Heart left ventricle (tissue), 16 donors: ENCODE measurements at regions of chr11 and their contacts with region 1.

Region 1: DNA sequence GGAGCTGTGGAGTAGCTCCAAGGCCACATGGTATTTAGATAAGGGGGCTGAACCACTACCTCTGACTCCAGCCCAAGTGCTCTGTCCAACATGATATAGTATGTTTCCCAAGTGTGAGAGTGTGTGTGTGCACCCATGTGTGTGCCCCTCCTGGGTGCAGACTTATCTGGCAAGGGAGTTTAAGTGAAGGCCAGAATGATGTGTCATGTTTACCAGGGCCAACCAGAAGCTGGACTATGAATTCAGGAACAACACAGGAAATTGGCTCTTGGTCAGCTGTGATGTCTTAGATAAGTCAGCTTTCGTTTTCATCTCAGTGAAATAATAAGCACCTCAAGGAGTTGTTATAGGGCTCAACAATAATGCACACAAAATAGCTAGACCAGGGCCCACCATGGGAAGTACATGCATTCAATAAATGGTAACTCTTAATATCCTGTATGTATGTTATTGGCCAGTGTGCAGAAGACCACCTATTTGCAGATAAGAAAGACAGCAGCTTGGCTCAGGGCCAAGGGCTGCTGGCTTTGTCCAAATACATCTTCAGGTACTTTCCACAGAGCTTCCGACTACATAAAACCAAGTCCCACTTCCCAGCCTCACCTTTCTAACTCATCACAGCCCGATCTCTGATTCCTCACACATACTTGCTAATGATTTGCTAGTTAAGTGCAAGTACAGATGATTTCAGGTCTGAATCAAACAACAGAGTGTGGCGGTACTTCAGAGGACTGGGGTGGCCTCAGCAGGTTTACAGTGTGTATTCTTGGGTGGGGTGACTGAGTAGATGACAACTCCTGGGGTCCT is 120.9 kb downstream of the ME3 start:
- DNase-seq: peak in 1 of 5 donors; percentile 33
- ATAC-seq: peak; percentile 24 to 68 (median 59)
- H3K4me3 ChIP-seq: no peak overlapping the region
- H3K27ac ChIP-seq: peak overlapping the region; percentile 51 to 89 (median 66)
- H3K4me1 ChIP-seq: peaks cover 5 to 58% (median 33%) of the 10 kb centered on the region in 12 donors
- H3K27me3 ChIP-seq: no peaks in the 10 kb centered on the region
- CTCF ChIP-seq: no peak
- POLR2A ChIP-seq: peak in 1 of 2 donors; percentile 24

Region 2: DNA sequence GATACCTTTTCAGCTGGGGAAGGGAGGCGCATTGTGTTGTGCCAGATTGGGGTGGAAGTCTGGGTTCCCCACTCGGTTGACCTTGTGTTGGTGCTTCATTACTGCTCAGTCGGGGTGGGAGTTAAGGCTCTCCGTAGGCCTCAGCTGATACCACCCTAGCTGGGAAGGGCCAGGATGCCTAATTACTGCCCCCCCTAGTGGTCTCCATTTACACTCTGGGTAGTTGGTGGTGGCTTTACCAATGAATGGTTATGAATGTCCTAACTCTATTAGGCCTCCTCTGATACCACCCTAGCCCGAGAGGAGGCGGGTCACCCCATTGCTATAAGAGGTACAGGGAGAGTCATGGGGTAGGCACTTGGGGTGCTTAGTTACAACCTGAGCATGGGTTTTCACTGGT is 277.0 kb before region 1 on chr11:
- intact Hi-C with region 1: no loop called
- DNase-seq: no peak
- ATAC-seq: no peak
- H3K4me3 ChIP-seq: no peak overlapping the region
- H3K27ac ChIP-seq: no peak overlapping the region
- H3K4me1 ChIP-seq: no peaks in the 10 kb centered on the region
- H3K27me3 ChIP-seq: no peaks in the 10 kb centered on the region
- CTCF ChIP-seq: peak in 2 of 12 donors; percentile 18 to 19
- POLR2A ChIP-seq: no peak

Region 3: DNA sequence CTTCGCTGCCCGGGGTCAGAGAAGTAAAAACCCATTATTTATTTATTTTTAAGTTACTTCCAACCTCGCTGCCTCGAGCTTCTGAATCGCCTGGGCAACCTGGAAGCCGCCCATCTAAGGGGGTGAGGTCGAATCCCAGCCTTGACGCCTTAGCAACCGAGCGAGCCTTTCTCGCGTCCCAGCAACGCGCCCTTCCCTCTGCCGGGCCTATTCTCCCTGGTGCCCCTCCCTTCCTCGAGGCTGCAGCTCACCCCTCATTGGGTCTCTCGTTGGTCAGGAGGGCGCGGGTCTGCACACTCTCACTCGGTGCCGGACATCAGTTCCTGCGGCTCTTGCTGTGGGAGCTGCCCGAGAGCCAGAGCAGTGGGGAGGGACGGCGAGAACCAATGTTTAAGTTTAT is 176.9 kb before region 1 on chr11 and contains the start of gene CCDC81:
- intact Hi-C with region 1: no loop called
- DNase-seq: peak in 2 of 5 donors; percentile 8 to 61
- ATAC-seq: peak in 3 of 4 donors; percentile 18 to 37 (median 22)
- H3K4me3 ChIP-seq: peak within 1 kb of the TSS in 8 of 12 donors; percentile 4 to 43 (median 22)
- H3K27ac ChIP-seq: no peak within 1 kb of the TSS
- H3K4me1 ChIP-seq: peaks cover 0 to 7% (median 0%) of the 10 kb centered on the region in 12 donors
- H3K27me3 ChIP-seq: no peaks in the 10 kb centered on the region
- CTCF ChIP-seq: no peak
- POLR2A ChIP-seq: no peak
- total RNA-seq, gene CCDC81: 0.26 to 1.2 (median 0.36) TPM in 8 of 9 donors, not detected in the other

Region 4: DNA sequence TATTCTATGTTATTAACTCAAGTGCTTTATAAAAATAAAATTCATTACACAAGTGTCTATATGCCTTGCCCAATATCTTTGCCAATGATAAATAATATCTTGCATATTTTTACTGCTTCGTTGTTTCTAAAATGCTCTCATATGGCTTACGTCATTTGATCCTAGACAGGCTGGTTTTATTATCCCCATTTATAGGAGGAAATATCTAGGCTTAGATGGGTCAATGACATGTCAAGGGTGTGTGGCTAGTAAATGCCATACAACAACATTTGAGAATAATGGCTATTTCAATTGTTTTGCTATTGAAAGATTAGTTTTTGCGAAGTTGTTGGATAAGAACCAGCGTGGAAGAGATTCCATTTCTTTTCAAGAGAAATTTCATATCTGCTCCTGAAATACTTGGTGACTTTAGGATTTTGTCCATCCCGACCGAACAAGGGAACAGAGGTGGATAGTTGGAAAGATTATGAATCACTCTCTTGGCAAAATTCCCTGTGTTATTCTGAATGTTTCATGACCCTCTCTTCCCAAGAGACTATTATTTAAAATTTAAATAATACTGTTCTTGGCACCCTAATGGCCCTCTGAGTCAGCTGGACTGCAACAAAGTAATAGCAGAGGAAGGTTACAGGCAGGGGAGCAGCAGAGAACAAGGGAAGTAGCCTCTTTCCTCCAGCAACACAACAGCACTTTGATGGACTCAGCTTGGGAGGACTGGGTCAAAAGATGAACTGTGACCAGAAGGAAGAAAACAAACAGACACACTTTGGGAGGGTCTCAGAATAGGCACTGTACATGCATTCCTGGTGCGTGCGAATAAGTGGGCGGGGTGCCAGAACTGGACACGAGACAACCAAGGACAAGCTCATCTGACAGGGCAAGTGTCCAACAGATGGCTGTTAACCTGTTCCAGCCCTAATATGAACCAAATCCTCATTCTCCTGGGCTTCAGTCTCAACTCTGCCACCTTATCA is 26.5 kb after region 1 on chr11:
- intact Hi-C with region 1: loop called in 2 of 10 experiments (anchors 2 kb)
- DNase-seq: peak; percentile 54 to 86 (median 75)
- ATAC-seq: peak; percentile 74 to 94 (median 88)
- H3K4me3 ChIP-seq: no peak overlapping the region
- H3K27ac ChIP-seq: peak overlapping the region in 10 of 12 donors; percentile 35 to 80 (median 51)
- H3K4me1 ChIP-seq: peaks cover 4 to 55% (median 29%) of the 10 kb centered on the region in 12 donors
- H3K27me3 ChIP-seq: no peaks in the 10 kb centered on the region
- CTCF ChIP-seq: no peak
- POLR2A ChIP-seq: no peak